A549 (cell line): ENCODE measurements at regions of chr22 and their contacts with region 1.

Region 1: DNA sequence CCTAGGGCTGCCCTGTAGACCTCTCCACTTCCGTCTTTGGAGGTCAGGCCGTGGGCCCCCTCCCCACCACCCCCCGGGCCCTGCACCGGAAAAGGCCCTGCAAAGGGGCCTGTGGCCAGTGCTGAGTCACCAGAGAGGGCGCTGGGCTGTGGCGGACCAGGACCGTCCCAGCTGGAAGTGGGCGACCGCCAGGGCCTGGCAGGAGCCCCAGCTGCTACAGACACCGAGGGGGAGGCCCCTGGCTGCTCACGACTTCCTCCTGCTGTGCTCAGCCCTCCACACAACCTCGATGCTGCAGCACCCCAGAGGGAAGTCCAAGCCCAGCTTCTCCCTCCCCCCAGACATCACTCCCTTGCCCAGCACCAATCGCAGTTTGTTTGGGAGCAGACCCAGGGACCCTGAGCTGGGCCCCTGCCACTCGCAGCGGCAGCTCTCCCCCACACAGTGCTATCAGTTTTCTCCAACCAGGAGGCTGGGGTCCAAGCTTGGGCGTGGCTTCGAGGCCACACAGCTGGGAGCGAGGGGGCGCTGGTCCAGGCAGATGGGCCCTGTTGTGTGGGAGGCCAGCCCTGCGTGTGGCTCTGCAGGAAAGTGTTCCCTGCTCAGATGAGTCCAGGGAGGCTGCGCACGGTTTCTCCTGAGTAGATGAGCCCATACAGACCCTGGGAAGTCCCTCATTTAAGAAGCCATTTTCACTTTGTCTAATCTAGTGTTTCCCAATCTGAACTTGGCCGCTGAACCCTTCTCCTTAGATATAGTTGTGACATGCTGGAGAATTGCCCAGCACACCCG is 5.6 kb upstream of the SH3BP1 start:
- DNase-seq: no peak
- ATAC-seq: no peak
- H3K4me3 ChIP-seq: no peak overlapping the region
- H3K27ac ChIP-seq: no peak overlapping the region; a peak in 1 of 6 replicates
- H3K4me1 ChIP-seq: 0 out of 3 replicates have a peak, but pooled peaks cover under 1% of the 10 kb centered on the region
- CTCF ChIP-seq: no peak
- EP300 ChIP-seq: no peak
- POLR2A ChIP-seq: no peak
- RAD21 ChIP-seq: no peak

Region 2: DNA sequence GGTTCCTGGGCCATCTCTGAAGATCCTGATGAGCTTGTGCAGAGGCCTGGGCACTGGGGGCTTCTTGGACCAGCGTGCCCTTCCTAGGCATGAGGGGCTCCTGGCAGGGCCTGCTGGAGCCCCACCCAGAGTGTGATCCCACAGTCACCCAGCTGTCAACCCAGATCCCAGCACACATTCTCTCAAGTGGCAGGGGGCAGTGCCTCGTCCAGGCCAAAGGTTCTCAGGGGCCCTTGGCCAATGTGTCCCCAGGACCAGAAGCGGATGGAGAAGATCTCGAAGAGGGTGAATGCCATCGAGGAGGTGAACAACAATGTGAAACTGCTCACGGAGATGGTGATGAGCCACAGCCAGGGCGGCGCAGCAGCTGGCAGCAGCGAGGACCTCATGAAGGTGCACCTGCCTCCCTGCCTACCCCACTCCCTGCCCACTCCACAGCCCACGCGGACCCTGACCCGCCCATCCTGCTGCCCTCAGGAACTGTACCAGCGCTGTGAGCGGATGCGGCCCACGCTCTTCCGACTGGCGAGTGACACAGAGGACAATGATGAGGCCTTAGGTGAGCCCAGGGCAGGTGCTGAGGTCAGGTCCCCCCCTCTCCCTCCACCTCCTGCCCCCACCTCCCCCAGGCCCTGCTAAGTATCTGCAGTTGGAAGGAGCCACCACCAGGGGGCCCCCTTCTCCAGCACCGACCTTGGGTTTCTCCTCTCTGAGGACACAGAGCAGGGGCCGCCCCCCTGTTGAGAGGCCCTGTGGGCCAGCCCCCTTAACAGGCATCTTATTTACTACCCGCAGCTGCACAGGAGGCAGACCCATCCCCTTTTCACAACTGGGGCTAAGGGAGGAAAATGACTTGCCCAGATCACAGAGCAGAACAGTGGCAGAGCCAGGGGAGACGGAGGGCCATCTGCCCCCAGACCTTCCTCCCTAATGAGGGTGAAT is 10.5 kb before region 1 on chr22:
- CTCF ChIA-PET with region 1: interaction called, 129 read pairs
- POLR2A ChIA-PET with region 1: no interaction called
- DNase-seq: peak; percentile 32 to 57
- ATAC-seq: peak; percentile 77 to 89
- H3K4me3 ChIP-seq: no peak overlapping the region
- H3K27ac ChIP-seq: no peak overlapping the region
- H3K4me1 ChIP-seq: no peaks in the 10 kb centered on the region
- CTCF ChIP-seq: peak; percentile 70
- EP300 ChIP-seq: no peak
- POLR2A ChIP-seq: no peak
- RAD21 ChIP-seq: peak; percentile 45 to 58

Region 3: GRCh38 chr22:37674951-37675929 is 41.4 kb after region 1 on chr22 and contains the start of gene LGALS1:
- CTCF ChIA-PET with region 1: no interaction called
- POLR2A ChIA-PET with region 1: no interaction called
- DNase-seq: peak; percentile 65 to 92
- ATAC-seq: peak; percentile 79 to 86
- H3K4me3 ChIP-seq: peak within 1 kb of the TSS; percentile 64
- H3K27ac ChIP-seq: peak within 1 kb of the TSS; percentile 93 to 97
- H3K4me1 ChIP-seq: peaks cover 18% of the 10 kb centered on the region; the same call in 2 of the 3 replicates
- CTCF ChIP-seq: no peak
- EP300 ChIP-seq: no peak
- POLR2A ChIP-seq: peak; percentile 64
- RAD21 ChIP-seq: no peak
- polyA plus RNA-seq, gene LGALS1: 584 and 723 TPM in 2 replicates

Region 4: DNA sequence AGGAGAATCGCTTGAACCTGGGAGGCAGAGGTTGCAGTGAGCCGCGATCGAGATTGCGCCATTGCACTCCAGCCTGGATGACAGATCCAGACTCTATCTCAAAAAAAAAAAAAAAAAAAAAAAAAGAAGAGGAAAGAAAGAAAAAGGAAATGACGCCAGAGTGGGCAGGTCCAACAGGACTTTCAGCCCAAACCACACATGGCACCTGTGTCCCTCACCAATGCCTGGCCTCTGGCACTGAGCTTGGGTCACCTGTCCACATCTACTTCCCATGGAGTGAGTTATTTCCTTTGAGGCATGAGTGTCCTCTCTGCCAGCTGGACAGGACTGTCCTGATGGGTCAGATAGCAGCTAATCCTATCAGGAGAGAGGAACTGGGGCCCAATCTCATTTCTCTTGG is 158.7 kb after region 1 on chr22:
- CTCF ChIA-PET with region 1: interaction called, 10 read pairs
- POLR2A ChIA-PET with region 1: no interaction called
- DNase-seq: no peak
- ATAC-seq: no peak
- H3K4me3 ChIP-seq: no peak overlapping the region
- H3K27ac ChIP-seq: no peak overlapping the region
- H3K4me1 ChIP-seq: no peaks in the 10 kb centered on the region
- CTCF ChIP-seq: no peak
- EP300 ChIP-seq: no peak
- POLR2A ChIP-seq: no peak
- RAD21 ChIP-seq: no peak